ENCODE measurements at regions of chr12 and their contacts with region 1.

Region 1: DNA sequence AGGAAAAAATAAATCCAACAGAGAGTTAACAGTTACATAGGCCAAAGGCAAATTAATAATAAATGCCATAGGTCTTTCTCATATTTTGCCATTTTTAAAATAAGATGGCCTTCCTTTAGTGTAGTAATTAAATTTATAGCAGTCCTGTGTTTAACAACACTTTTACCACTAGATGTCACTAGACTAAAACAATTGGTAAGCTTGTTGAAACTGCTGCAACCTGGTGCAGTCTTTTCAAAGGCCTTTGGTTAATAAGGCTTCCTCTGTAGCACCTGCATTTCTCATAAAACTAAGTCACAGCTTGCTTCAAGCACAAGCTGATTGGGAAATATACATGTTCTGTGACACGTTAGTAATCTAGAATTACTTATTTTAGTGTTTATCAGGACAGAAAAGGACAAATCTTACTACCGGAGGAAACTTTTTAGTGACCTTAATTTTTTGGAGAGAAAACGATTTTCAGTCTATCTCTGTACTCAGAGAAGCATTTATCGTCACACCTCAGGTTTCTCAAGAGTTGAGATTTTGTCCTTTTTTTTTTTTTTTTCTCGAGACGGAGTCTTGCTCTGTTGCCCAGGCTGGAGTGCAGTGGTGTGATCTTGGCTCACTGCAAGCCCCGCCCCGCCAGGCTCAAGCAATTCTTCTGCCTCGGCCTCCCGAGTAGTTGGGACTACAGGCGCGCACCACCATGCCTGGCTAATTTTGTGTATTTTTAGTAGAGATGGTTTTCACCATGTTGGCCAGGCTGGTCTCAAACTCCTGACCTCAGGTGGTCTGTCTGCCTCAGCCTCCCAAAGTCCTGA is 20.0 kb downstream of the BORCS5 start:
- DNase-seq: peak in 1 of 10 donors; percentile 13
- H3K4me3 ChIP-seq: no peak overlapping the region
- H3K27ac ChIP-seq: peak overlapping the region in 53 of 59 donors; percentile 8 to 84 (median 55)
- H3K27me3 ChIP-seq: no peaks in the 10 kb centered on the region
- CTCF ChIP-seq: peak; percentile 68 to 96 (median 84)

Region 2: DNA sequence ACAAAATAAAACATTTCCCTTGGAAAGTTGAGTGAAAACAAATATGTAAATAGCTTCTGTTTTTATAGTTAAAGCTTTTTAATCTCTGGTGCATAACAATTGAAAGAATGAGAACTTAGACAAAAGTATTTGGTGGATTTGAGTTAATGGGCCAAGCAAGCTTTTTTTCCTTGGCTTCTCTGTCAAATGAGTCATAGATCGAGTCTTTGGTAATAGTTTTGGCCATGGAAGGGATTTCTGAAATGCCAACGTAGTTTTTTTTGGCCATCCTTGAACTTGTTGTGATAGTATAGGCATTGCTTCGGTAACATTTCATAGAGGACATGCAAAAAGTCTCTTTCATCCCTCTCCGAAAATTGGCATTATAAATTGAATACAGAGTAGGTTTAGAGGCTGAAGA is 284.2 kb after region 1 on chr12:
- intact Hi-C with region 1: loop called (anchors 2 to 5 kb)
- DNase-seq: no peak
- H3K4me3 ChIP-seq: peak overlapping the region in 1 of 59 donors; percentile 22
- H3K27ac ChIP-seq: peak overlapping the region in 23 of 59 donors; percentile 1 to 83 (median 33)
- H3K27me3 ChIP-seq: no peaks in the 10 kb centered on the region
- CTCF ChIP-seq: no peak

Region 3: DNA sequence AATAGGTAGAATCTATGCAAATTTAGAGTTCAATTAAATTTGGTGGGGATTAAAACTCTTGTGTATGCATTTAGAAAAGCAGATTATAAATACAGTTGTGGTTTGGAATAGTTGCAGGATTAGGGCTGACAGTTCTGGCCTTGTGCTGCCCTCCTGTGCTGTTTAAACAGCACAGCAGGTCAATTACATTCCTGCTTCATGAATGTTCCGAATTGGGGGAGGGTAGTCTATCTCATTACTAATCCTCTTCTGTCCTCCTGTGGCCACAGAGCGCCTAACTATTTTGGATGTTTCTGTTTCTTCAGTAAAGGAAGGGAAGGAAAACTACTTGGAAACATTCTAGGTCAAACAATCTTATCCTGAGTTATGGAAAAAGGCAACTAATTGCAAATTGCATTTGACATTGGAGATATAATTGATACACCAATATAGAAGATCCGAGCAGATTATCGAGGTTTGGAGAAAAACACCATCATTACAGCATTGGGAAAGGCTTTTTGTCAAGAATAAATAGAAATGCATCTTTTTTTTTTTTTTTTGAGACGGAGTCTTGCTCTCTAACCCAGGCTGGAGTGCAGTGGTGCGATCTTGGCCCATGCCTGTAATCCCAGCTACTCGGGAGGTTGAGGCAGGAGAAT is 327.9 kb after region 1 on chr12:
- intact Hi-C with region 1: loop called (anchors 2 to 5 kb)
- DNase-seq: peak in 7 of 10 donors; percentile 47 to 73 (median 59)
- H3K4me3 ChIP-seq: peak overlapping the region in 3 of 59 donors; percentile 2 to 24 (median 2)
- H3K27ac ChIP-seq: peak overlapping the region in 42 of 59 donors; percentile 4 to 74 (median 44)
- H3K27me3 ChIP-seq: no peaks in the 10 kb centered on the region
- CTCF ChIP-seq: peak; percentile 74 to 100 (median 93)